Mammary epithelial cell (primary cell): ENCODE measurements at regions of chr18 and their contacts with region 1.

Region 1: DNA sequence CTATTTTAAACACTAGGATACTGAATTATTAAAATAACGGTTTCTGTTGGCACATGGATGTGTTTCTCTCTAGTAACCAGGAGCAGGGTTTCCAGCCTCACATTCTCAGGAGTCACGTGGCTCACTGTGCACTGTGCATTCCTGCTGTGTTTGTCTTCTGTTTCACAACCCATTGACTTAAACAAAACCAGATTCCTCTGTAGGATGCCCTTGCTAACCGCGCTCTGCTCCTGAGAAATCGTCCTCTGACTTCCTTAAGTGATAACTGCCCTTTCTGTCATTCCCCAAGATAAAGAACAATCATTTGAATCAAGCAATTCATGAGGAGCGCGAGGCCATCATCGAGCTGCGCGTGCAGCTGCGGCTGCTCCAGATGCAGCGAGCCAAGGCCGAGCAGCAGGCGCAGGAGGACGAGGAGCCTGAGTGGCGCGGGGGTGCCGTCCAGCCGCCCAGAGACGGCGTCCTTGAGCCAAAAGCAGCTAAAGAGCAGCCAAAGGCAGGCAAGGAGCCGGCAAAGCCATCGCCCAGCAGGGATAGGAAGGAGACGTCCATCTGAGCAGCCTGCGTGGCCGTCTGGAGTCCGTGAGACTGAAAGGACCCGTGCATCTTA is 60.2 kb downstream of the RALBP1 start:
- DNase-seq: no peak
- H3K4me3 ChIP-seq: no peak overlapping the region
- H3K27ac ChIP-seq: no peak overlapping the region
- H3K4me1 ChIP-seq: peaks cover 17% of the 10 kb centered on the region
- H3K27me3 ChIP-seq: no peaks in the 10 kb centered on the region
- CTCF ChIP-seq: no peak

Region 2: GRCh38 chr18:9066817-9067306 is 468.6 kb before region 1 on chr18:
- CTCF ChIA-PET with region 1: no interaction called
- dilution Hi-C with region 1: no loop called
- in situ Hi-C with region 1: no loop called
- intact Hi-C with region 1: loop called (anchors 5 kb)
- DNase-seq: peak; percentile 15
- H3K4me3 ChIP-seq: no peak overlapping the region
- H3K27ac ChIP-seq: no peak overlapping the region
- H3K4me1 ChIP-seq: peaks cover 12% of the 10 kb centered on the region
- H3K27me3 ChIP-seq: no peaks in the 10 kb centered on the region
- CTCF ChIP-seq: no peak

Region 3: DNA sequence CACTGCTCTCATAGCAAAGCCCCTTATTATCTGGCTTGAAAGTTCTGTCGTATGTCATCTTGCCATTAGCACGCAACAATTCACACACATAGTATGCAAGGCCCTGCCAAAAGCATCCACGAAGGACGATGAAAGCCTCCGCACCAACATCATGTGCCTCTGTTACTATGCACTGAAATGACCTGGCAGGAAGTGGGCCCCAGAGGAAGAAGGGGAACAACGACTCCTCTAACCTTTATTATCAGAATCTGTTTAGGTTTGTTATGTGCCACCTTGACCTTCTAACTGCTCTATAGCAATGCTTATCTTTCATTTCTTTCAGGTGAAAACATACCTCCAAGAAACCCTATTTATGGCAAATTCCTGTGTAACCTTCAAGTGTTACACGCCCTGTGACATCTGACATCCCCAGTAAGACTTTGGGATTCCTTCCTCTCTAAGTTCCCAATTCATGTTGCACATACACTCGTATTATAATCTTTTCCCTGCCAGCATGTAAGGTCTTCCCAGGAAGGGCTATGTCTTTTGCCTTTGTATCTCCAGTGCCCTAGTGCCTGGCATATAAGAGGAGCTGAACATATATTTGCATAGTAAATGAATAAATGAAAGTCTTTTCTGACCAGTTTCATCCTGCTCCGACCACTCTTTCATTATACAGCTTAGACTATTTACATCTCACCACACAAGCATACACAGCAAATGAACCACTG is 440.0 kb before region 1 on chr18:
- CTCF ChIA-PET with region 1: no interaction called
- dilution Hi-C with region 1: no loop called
- in situ Hi-C with region 1: loop called in 1 of 2 experiments (anchors 25 kb)
- intact Hi-C with region 1: no loop called
- DNase-seq: no peak
- H3K4me3 ChIP-seq: no peak overlapping the region
- H3K27ac ChIP-seq: no peak overlapping the region
- H3K4me1 ChIP-seq: peaks cover 3% of the 10 kb centered on the region
- H3K27me3 ChIP-seq: no peaks in the 10 kb centered on the region
- CTCF ChIP-seq: no peak

Region 4: GRCh38 chr18:9563331-9563730 is 27.8 kb after region 1 on chr18:
- CTCF ChIA-PET with region 1: no interaction called
- dilution Hi-C with region 1: no loop called
- in situ Hi-C with region 1: no loop called
- intact Hi-C with region 1: no loop called
- DNase-seq: no peak
- H3K4me3 ChIP-seq: no peak overlapping the region
- H3K27ac ChIP-seq: no peak overlapping the region
- H3K4me1 ChIP-seq: peaks cover 12% of the 10 kb centered on the region
- H3K27me3 ChIP-seq: no peaks in the 10 kb centered on the region
- CTCF ChIP-seq: no peak

Region 5: DNA sequence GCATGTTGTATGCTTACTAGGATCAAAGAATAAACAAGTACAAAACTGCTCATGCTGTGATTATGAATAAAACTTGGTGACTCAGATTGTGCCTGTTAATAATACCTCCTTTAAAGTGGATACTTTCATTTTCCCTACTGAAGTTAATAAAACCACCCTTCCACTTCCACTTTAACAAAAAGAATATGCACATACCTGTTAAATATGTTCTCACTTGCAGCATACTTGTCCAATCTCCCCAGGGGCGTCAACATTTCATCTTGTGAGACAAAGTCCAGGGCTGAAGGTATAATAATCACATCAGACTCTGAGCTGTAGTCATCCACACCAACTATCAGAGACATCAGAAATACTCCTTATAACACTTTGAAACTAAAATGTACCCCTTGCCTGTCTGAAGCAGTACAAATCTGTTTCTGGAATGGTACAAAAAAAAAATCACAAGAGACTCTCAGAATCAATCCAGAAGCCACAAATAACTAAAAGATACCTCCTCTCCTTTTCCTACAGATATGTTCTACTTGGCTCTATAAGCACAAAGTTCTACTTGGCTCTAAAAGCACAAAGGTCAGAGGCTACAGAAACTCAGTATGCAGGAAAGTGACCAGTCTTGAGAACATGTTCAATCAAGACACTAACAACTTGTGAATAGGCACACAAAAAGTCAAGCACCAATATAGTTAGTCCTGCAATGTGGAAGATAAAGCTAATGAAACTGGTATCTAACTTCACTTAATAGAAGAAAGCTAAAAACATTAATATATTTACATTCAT is 59.5 kb after region 1 on chr18:
- CTCF ChIA-PET with region 1: no interaction called
- dilution Hi-C with region 1: no loop called
- in situ Hi-C with region 1: loop called in 1 of 2 experiments (anchors 10 kb)
- intact Hi-C with region 1: no loop called
- DNase-seq: peak; percentile 85
- H3K4me3 ChIP-seq: peak overlapping the region; percentile 21 to 37 (median 26)
- H3K27ac ChIP-seq: peak overlapping the region; percentile 73
- H3K4me1 ChIP-seq: peaks cover 26% of the 10 kb centered on the region
- H3K27me3 ChIP-seq: no peaks in the 10 kb centered on the region
- CTCF ChIP-seq: no peak